ENCODE measurements at regions of chr6 and their contacts with region 1.

Region 1: DNA sequence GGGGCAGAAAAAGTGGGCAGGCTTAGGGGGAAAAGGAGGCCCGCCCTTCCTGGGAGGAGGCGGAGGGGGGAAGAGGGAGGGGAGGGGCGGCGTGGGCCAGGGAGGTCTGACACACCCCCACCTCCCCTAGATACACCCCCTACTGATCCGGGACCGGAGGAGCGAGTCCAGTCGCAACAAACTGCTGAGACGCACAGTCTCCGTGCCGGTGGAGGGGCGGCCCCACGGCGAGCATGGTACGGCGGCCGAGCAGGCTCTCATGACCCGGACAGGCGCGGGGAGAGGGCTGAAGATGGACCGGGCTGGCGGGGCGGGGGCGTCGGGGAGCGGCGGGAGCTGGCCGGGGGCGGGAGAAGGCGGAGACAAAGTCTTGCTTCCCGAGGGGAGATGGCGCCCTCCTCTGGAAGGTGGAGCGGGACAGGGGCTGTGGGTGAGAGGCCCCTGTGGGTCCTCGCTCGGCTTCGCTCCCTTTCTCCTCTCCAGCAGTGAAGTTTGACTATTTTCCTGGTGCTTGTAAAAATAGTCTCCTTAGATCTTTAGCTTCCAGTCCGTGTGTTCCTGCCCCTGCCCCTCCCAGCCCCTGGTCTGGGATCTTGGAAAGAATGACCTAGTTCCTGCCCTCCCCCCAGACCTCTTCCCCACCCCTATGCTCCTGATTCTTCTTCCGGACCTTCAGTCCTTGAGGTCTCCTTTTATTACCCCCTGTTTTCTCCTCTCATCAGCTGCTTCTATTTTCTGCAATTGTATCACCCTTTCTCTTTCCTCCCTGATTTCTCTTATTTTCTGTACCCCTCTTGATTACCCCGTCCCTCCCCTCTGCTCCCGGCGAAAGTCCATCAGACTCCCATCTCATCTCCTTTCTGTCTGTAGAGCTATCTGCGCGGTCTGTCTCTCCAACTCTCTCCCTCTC is 6.1 kb downstream of the SYNGAP1 start:
- DNase-seq: peak; percentile 82 to 94
- H3K4me3 ChIP-seq: peak overlapping the region; percentile 61 to 77
- H3K27ac ChIP-seq: peak overlapping the region; percentile 95 to 97
- H3K4me1 ChIP-seq: peaks cover 0 to 54% (median 38%) of the 10 kb centered on the region in 4 donors
- H3K27me3 ChIP-seq: no peaks in the 10 kb centered on the region
- CTCF ChIP-seq: peak; percentile 42 to 69

Region 2: DNA sequence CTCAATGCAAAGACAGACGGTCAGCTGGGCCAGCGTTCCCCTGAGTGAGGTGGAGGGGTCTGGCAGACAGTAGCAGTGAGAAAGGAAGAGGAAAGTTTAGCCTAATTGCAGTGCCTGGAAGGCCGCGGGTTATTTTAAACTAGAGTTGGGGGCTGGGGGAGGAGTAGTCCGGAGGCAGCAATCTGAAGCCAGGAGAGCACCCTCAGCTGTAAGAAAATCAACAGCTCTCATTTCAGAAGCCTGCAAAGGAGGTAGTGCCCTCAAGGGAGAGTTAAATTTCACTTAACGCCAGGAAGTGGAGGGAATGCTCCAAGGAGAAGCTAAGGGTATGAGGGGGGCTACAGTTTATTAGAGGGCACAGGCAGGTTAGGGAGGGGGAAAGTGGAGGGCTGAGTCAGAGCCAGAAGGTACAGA is 190.7 kb before region 1 on chr6:
- intact Hi-C with region 1: no loop called
- DNase-seq: peak in 1 of 2 donors; percentile 27
- H3K4me3 ChIP-seq: no peak overlapping the region
- H3K27ac ChIP-seq: no peak overlapping the region
- H3K4me1 ChIP-seq: no peaks in the 10 kb centered on the region
- H3K27me3 ChIP-seq: peaks cover 0 to 52% of the 10 kb centered on the region in 2 donors
- CTCF ChIP-seq: no peak

Region 3: GRCh38 chr6:33248925-33249731 is 176.8 kb before region 1 on chr6:
- intact Hi-C with region 1: no loop called
- DNase-seq: peak; percentile 98 to 99
- H3K4me3 ChIP-seq: peak overlapping the region; percentile 58 to 79
- H3K27ac ChIP-seq: peak overlapping the region; percentile 92 to 97
- H3K4me1 ChIP-seq: peaks cover 0 to 28% (median 20%) of the 10 kb centered on the region in 4 donors
- H3K27me3 ChIP-seq: peaks cover 0 to 17% of the 10 kb centered on the region in 2 donors
- CTCF ChIP-seq: no peak

Region 4: DNA sequence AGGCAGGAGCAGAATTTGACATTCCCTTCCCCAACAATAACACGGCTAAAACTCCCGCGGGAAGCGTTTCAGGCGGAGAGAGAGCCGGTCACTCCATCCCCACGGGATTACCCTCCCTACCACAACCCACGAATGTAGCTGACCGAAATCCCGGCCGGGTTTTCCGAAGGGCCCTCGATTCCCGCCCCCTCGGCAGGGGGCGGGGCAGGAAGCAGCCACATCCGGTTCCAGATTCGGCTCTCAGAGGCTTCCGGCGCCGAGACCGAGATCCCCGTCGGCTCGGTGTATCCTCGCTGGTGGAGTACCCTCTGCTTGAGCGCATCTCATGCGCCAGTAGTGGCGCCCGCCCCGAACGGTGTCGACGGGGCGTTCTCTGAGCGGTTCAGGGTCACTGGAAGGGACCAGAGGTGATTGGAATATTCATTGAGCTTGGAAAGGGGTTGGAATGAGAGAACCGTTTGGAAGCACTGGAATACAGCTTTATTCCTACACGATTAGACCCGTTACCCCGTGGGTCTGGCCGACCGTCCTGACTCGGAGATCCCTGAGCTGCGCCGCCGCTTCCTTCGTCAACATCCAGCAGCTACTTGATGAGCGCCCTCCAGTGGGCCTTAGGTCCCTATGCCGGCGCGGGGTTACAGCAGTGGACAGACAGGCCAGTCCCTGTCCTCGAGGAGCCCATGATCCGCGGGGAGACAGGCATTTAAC is 126.5 kb before region 1 on chr6:
- intact Hi-C with region 1: no loop called
- DNase-seq: peak; percentile 89 to 96
- H3K4me3 ChIP-seq: peak overlapping the region; percentile 76 to 79
- H3K27ac ChIP-seq: peak overlapping the region; percentile 94 to 97
- H3K4me1 ChIP-seq: peaks cover 0 to 42% (median 24%) of the 10 kb centered on the region in 4 donors
- H3K27me3 ChIP-seq: no peaks in the 10 kb centered on the region
- CTCF ChIP-seq: peak; percentile 65 to 68

Region 5: DNA sequence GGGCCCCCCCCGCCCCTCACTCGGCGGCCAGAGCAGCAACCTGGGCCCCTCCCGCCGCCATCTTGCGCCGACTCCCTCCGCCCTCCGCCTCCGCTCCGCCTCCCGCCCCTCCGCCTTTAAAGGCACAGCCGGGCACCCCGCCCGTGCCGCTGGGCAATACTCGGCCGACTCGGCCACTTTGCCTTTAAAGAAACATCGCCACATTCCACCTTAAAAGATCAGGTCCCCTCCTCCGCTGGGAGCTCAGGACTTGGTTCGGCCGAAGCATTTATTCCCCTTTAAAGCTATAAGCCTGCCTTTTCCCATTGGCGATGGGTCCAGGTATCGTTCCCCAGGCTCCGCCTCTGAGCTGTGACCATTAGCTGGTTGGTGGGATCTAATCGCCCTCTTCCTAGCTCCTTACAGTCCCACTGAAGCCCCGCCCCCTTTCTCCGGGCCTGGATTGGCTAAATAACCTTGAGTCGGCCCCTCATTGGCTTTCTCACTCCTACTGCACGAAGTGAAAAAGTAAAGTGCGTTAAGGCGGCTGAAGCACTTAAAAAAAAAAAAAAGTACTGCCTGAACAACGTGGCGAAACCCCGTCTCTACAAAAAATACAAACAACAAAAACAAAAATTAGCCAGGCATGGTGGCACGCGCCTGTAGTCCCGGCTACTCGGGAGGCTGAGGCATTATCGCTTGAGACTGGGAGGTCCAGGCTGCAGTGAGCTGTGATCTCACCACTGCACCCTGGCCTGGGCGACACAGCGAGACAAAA is 108.1 kb before region 1 on chr6 and contains the start of gene ZBTB22:
- intact Hi-C with region 1: loop called (anchors 10 kb)
- DNase-seq: peak; percentile 100
- H3K4me3 ChIP-seq: peak within 1 kb of the TSS; percentile 54 to 55
- H3K27ac ChIP-seq: peak within 1 kb of the TSS; percentile 77 to 83
- H3K4me1 ChIP-seq: peaks cover 0 to 62% (median 60%) of the 10 kb centered on the region in 4 donors
- H3K27me3 ChIP-seq: no peaks in the 10 kb centered on the region
- CTCF ChIP-seq: peak in 1 of 2 experiments; percentile 23

Region 6: DNA sequence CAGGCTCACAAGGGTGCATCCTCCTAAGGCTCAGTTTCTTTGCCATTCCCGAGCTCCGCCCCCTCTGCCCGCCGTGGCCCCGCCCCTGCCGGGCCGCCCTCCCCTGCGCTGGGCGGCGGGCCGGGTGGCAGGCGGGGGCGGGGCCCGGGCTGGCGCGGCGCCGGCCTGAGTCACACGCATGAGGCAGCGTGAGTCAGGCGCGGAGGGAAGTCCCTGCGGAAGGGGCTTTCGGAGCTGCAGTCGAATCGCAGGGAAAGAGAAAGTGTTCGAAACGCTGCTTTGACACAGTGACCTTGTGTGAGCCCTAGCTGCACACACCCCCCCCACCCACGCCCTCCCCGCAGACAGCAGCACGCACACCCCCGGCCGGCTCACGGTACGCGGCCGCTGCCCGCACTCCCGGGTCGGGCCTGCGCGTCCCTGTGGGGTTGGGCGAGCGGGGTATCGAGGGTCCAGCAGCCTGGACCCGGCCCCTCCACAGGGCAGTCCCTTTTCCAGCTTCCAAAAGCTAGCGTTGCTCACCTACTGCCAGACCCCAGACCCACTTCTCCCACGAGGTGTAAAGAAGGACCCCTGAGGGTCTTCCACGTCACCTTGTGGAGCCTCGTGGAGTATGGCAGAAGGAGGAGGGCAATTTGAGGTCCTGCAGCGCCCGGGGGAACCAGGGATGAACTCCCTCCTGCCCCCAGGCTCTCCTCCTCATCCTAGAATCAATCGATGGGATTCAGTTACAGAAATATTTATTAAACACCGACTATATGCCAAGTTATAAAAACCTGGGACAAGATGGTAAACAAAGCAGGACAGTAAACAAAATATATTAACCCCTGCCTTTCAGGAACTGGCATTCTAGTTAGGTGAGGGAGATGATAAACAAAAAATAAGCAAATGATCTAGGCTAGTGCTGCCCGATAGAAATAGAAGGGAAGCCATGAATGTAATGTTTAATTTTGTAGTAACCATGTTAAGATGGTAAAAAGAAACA is 798.3 kb after region 1 on chr6:
- intact Hi-C with region 1: loop called (anchors 10 kb)
- DNase-seq: peak; percentile 93 to 97
- H3K4me3 ChIP-seq: peak overlapping the region; percentile 59 to 70
- H3K27ac ChIP-seq: peak overlapping the region; percentile 88 to 93
- H3K4me1 ChIP-seq: peaks cover 0 to 13% (median 9%) of the 10 kb centered on the region in 4 donors
- H3K27me3 ChIP-seq: no peaks in the 10 kb centered on the region
- CTCF ChIP-seq: no peak

Measured in tibial artery (tissue), 4 donors.